ENCODE measurements at regions of chr12 and their contacts with region 1.

Region 1: GRCh38 chr12:101773650-101774162 is 34.4 kb upstream of the SYCP3 start:
- DNase-seq: peak; percentile 47 to 72 (median 69)
- H3K4me3 ChIP-seq: no peak overlapping the region
- H3K4me3 Mint-ChIP-seq: no peak overlapping the region
- H3K27ac ChIP-seq: no peak overlapping the region
- H3K27ac Mint-ChIP-seq: peak overlapping the region in 2 of 7 donors; percentile 3 to 69
- H3K4me1 ChIP-seq: no peaks in the 10 kb centered on the region
- H3K4me1 Mint-ChIP-seq: peaks cover 0 to 4% (median 2%) of the 10 kb centered on the region in 4 donors
- H3K27me3 ChIP-seq: no peaks in the 10 kb centered on the region
- H3K27me3 Mint-ChIP-seq: no peaks in the 10 kb centered on the region

Region 2: DNA sequence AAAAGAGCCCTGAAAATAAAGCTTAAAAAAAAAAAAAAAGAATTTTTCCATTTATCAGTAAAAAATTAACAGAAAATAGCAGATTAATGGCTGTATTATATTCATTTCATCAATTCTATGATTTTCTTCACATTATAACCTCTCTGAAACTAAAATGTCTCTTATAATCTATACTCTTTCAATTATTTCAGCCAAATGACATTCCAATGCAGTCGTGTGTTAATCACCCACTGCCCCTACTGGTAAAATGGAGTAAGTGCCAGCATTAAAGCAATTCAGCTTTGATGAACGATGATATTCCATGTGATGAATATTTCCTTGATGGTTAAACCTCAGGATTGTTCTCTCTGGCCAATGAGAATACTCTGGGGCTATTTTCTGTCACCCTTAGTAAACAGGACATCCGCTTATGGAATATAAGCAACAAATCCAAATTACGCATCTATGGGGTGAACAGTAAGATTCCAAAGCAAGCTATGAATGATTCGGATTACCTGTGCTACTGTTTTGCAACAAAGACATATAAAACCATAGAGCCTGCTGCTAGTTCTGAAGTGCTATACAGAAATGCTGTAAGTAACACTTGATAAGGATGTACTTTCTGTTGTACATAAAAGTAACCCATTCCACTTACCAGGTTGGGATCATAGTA is 14.2 kb before region 1 on chr12:
- CTCF ChIA-PET with region 1: interaction called, 12 read pairs
- POLR2A ChIA-PET with region 1: no interaction called
- intact Hi-C with region 1: no loop called
- DNase-seq: peak; percentile 22 to 49 (median 29)
- H3K4me3 ChIP-seq: no peak overlapping the region
- H3K4me3 Mint-ChIP-seq: no peak overlapping the region
- H3K27ac ChIP-seq: no peak overlapping the region
- H3K27ac Mint-ChIP-seq: no peak overlapping the region
- H3K4me1 ChIP-seq: no peaks in the 10 kb centered on the region
- H3K4me1 Mint-ChIP-seq: peaks cover 0 to 3% (median 1%) of the 10 kb centered on the region in 4 donors
- H3K27me3 ChIP-seq: no peaks in the 10 kb centered on the region
- H3K27me3 Mint-ChIP-seq: no peaks in the 10 kb centered on the region

Region 3: DNA sequence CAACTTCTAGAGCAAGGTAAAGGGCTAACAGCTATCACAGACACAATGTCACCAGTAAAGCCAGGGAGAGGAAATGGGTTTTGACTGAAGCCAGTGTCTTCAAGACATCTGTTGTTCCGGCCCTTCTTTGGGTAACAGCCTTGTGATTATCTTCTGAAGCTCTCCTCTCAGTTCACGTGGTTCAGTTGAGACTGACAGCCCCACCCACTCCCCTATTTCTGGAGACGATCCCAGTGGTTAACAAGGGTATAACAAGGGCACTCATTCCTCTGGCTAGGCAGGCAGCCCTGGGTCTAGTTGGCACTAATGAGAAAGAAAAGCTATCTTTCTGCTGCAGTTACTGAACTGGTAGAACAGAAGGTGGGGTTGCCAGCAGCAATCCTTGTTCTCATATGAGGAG is 50.2 kb after region 1 on chr12:
- CTCF ChIA-PET with region 1: interaction called, 458 read pairs
- POLR2A ChIA-PET with region 1: interaction called, 21 read pairs
- intact Hi-C with region 1: no loop called
- DNase-seq: peak; percentile 74 to 87 (median 80)
- H3K4me3 ChIP-seq: no peak overlapping the region
- H3K4me3 Mint-ChIP-seq: peak overlapping the region in 7 of 8 donors; percentile 26 to 82 (median 69)
- H3K27ac ChIP-seq: no peak overlapping the region
- H3K27ac Mint-ChIP-seq: peak overlapping the region; percentile 64 to 95 (median 81)
- H3K4me1 ChIP-seq: peaks cover 44% of the 10 kb centered on the region
- H3K4me1 Mint-ChIP-seq: peaks cover 38 to 71% (median 51%) of the 10 kb centered on the region in 4 donors
- H3K27me3 ChIP-seq: no peaks in the 10 kb centered on the region
- H3K27me3 Mint-ChIP-seq: no peaks in the 10 kb centered on the region

Region 4: DNA sequence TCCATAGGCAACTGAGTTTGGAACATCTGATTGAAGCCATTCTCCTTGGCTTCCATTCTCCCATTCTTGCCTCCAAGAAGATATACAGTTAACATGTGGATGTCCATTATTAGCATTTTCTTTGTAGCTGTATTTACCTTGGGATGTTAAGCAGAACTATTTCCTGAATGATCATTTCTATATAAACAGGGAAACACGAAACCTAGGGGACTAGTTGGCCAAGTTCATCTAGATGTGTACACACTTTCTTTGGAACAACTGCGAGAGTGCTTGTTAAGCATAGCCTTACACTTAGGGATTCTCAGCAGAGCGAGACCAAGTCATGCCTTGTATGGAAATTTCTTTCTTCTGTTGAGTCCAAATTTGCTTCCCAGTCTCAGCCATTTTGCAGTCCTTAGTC is 145.7 kb after region 1 on chr12:
- CTCF ChIA-PET with region 1: interaction called, 5 read pairs
- POLR2A ChIA-PET with region 1: no interaction called
- intact Hi-C with region 1: loop called (anchors 2 kb)
- DNase-seq: no peak
- H3K4me3 ChIP-seq: no peak overlapping the region
- H3K4me3 Mint-ChIP-seq: no peak overlapping the region
- H3K27ac ChIP-seq: no peak overlapping the region
- H3K27ac Mint-ChIP-seq: no peak overlapping the region
- H3K4me1 ChIP-seq: peaks cover 10% of the 10 kb centered on the region
- H3K4me1 Mint-ChIP-seq: peaks cover 0 to 14% (median 5%) of the 10 kb centered on the region in 4 donors
- H3K27me3 ChIP-seq: no peaks in the 10 kb centered on the region
- H3K27me3 Mint-ChIP-seq: no peaks in the 10 kb centered on the region

Region 5: DNA sequence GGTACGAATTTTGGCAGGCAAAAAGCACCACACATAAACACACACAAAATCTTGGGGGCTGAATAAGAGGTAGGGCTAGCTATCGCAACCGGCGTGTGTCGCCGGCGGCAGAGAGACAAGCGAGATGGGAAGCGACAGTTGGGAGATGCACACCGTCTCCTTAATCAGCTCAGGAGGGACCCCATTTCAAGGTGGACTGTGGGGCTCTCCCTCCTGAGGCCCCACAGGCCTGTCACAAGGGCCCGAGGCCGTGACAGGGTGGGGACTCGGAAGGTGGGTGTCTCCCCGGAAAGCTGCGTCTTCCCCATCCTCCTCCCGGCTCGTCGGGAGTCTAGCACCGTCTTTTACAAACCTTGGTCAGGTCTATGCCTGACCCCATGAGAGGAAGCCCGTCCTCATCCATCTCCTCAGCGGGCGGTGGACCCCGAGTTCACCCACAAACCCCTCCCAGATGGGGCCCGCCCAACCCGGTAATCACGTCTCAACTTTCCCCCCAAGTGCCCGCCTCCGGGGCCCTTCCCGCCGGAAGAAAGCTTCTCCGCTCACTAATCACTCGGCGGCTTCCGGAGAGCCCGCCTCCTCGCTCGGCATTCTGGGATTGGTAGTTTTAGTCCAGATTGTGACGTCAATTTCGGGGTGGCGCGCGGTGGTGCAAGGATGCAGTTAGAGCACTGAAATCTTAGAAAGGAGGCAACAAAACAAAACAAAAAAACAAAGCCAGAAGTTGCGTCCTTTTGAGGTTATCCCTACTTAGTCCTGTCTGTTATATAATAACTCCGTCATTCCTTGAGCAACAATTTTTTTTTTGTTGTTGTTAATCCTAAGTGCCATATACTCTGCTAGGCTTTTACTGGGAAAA is 288.1 kb after region 1 on chr12 and contains the start of gene WASHC3:
- CTCF ChIA-PET with region 1: no interaction called
- POLR2A ChIA-PET with region 1: no interaction called
- intact Hi-C with region 1: loop called (anchors 10 kb)
- DNase-seq: peak; percentile 94 to 97 (median 94)
- H3K4me3 ChIP-seq: peak within 1 kb of the TSS; percentile 59 to 78
- H3K4me3 Mint-ChIP-seq: peak within 1 kb of the TSS; percentile 94 to 100 (median 98)
- H3K27ac ChIP-seq: peak within 1 kb of the TSS; percentile 97
- H3K27ac Mint-ChIP-seq: peak within 1 kb of the TSS; percentile 98 to 99 (median 99)
- H3K4me1 ChIP-seq: peaks cover 31% of the 10 kb centered on the region
- H3K4me1 Mint-ChIP-seq: peaks cover 27 to 46% (median 36%) of the 10 kb centered on the region in 4 donors
- H3K27me3 ChIP-seq: no peaks in the 10 kb centered on the region
- H3K27me3 Mint-ChIP-seq: peaks cover 2 to 3% of the 10 kb centered on the region in 2 donors
- total RNA-seq, gene WASHC3: 44.6 to 46.5 TPM

Measured in CD4-positive, alpha-beta memory T cell (primary cell).